ENCODE measurements at regions of chr10 and their contacts with region 1.

Region 1: DNA sequence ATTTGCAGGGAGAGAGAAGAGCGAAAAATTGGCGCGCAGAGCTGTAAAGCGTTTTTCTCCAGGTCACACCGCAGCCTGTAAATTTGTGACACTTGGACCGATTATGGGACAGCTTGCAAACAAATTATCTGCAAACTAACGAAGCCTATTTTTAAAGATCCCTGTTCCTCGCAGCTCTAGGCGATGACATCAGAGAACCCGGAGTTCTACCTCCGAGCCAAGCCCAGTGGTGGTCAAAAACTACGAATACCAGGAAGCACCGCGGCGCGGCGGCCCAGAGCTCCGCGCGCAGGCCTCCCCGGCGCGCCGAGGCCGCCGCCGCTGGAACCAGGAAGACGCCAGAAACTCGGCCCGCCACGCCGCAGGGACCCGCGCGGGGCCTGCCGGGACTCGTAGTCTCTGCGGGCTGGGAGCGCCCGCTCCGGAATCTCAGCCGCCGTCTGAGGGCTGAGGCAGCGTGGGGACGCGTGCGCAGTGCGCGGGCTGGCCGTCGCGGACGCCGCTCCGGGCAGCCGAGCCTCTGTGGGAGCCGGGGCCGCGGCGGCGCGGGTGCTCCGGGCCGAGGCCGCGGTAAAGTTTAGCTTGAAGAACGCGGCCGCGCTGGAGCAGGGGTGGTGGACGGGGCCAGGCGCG is at the start of gene PLEKHA1:
- DNase-seq: peak; percentile 96
- ATAC-seq: peak; percentile 93
- H3K4me3 Mint-ChIP-seq: peak within 1 kb of the TSS; percentile 87
- H3K27ac Mint-ChIP-seq: peak within 1 kb of the TSS; percentile 94
- H3K4me1 Mint-ChIP-seq: peaks cover 38% of the 10 kb centered on the region
- H3K27me3 Mint-ChIP-seq: peaks cover 2% of the 10 kb centered on the region
- total RNA-seq, gene PLEKHA1: 7.7 to 11.7 TPM

Region 2: DNA sequence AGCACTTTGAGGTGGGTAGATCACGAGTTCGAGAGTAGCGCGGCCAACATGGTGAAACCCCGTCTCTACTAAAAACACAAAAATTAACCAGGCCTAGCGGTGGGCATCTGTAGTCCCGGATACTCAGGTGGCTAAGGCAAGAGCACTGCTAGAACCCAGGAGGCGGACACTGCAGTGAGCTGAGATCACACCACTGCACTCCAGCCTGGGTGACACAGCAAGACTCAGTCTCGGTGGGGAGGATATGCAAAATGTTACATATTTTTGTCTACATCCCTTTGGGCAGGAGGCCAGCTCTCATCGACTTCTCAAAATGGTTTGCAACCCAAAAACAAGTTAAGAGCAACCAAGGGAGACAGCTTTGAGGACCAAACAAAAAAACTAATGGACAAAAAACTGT is 454.7 kb before region 1 on chr10:
- CTCF ChIA-PET with region 1: no interaction called
- POLR2A ChIA-PET with region 1: no interaction called
- intact Hi-C with region 1: no loop called
- DNase-seq: no peak
- ATAC-seq: no peak
- H3K4me3 Mint-ChIP-seq: no peak overlapping the region
- H3K27ac Mint-ChIP-seq: no peak overlapping the region
- H3K4me1 Mint-ChIP-seq: peaks cover 5% of the 10 kb centered on the region
- H3K27me3 Mint-ChIP-seq: no peaks in the 10 kb centered on the region

Region 3: GRCh38 chr10:121974535-121975294 is 399.6 kb before region 1 on chr10 and contains the start of gene NSMCE4A:
- CTCF ChIA-PET with region 1: no interaction called
- POLR2A ChIA-PET with region 1: no interaction called
- intact Hi-C with region 1: loop called in 1 of 2 experiments (anchors 10 kb)
- DNase-seq: peak; percentile 85
- ATAC-seq: peak; percentile 87
- H3K4me3 Mint-ChIP-seq: peak within 1 kb of the TSS; percentile 81
- H3K27ac Mint-ChIP-seq: peak within 1 kb of the TSS; percentile 42
- H3K4me1 Mint-ChIP-seq: peaks cover 19% of the 10 kb centered on the region
- H3K27me3 Mint-ChIP-seq: no peaks in the 10 kb centered on the region
- total RNA-seq, gene NSMCE4A: 56.3 to 56.4 TPM

Region 4: DNA sequence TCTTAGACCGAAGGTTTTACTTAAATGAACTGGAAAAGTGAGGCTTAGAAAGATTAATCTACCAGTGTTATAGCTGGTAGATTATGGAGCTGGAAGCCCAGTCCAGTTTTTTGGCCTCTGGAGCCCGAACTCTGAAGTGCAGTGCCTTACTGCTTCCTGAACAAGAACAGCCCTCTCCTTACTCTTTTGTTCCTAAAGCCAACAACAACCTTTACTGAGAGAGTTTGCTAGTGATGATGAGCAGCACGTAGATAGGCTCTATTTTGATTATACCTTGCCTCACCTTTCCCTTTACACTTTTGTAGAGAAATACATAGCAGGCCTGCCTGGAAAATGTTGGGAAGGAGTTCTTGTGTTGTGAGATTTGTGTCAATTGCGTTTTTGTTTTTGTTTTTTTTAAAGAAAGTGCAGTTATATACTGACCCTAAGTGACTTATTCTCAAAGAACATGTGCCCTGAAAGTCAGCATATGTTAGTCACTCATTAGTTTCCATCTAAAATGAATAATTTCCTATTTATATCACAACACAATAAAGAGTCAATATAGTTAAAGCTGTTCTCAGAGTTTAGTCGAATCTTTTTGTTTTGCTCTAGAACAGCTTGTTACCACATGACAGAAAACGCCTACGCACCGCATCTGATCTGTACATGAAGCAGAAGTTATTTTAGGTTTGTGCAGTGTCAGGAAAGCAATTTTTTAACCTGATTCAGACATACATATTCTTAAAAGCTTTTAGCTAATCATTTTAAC is 33.2 kb after region 1 on chr10:
- CTCF ChIA-PET with region 1: interaction called, 3 read pairs
- POLR2A ChIA-PET with region 1: interaction called, 3 read pairs
- intact Hi-C with region 1: loop called in 1 of 2 experiments (anchors 2 kb)
- DNase-seq: peak; percentile 80
- ATAC-seq: peak; percentile 77
- H3K4me3 Mint-ChIP-seq: no peak overlapping the region
- H3K27ac Mint-ChIP-seq: peak overlapping the region; percentile 71
- H3K4me1 Mint-ChIP-seq: peaks cover 34% of the 10 kb centered on the region
- H3K27me3 Mint-ChIP-seq: no peaks in the 10 kb centered on the region

Region 5: GRCh38 chr10:122435212-122435827 is 61.0 kb after region 1 on chr10:
- CTCF ChIA-PET with region 1: interaction called, 7 read pairs
- POLR2A ChIA-PET with region 1: no interaction called
- intact Hi-C with region 1: loop called in 1 of 2 experiments (anchors 1 kb)
- DNase-seq: no peak
- ATAC-seq: peak; percentile 39
- H3K4me3 Mint-ChIP-seq: no peak overlapping the region
- H3K27ac Mint-ChIP-seq: no peak overlapping the region
- H3K4me1 Mint-ChIP-seq: no peaks in the 10 kb centered on the region
- H3K27me3 Mint-ChIP-seq: no peaks in the 10 kb centered on the region

Region 6: DNA sequence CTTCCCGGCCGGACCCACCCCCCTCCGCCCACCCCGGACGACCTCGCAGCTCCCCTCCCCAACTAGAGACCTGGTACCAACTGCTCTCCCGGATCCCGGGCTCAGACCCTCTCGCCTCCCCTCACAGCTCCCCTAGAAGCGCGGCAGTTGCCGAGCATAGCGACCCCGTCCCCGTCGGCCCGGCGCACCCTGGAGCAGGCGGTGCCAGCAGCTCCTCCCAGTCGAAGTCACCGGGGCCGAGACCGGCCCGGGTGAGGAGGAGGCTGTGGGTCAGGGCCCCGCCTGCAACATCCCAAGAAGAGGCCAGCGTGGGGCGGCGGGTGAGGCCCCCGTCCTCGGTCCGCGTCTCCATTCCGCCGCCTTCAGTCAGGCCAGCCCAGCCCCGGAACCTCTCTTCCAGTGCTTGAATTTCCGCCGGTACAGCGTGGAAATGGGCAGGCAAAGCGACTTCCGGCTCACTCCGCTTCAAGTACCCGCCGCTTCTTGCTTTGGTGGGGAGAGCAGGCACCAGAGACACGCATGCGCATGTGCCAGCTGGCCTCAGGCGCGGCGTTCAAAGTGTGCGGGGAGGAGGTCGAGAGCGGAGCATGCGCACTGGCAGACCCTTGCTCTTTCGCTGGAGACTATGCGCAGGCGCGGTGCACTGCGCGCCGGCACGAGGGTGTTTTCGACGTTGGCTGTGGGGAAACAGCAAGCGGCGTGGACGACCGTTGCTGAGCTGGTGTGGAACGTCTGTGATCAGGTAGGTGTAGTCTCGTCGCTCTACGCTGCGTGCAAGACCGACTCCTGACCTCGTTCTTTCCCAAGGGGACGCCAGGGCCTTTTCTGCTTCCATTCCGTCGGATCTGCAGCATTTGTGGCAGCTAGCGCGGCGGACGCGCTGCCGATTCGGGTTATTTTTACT is 579.7 kb after region 1 on chr10 and contains the start of gene C10orf88:
- CTCF ChIA-PET with region 1: no interaction called
- POLR2A ChIA-PET with region 1: no interaction called
- intact Hi-C with region 1: loop called in 1 of 2 experiments (anchors 1 kb)
- DNase-seq: peak; percentile 98
- ATAC-seq: peak; percentile 98
- H3K4me3 Mint-ChIP-seq: peak within 1 kb of the TSS; percentile 77
- H3K27ac Mint-ChIP-seq: peak within 1 kb of the TSS; percentile 74
- H3K4me1 Mint-ChIP-seq: peaks cover 22% of the 10 kb centered on the region
- H3K27me3 Mint-ChIP-seq: no peaks in the 10 kb centered on the region
- total RNA-seq, gene C10orf88: 8.6 to 9.0 TPM

Region 7: DNA sequence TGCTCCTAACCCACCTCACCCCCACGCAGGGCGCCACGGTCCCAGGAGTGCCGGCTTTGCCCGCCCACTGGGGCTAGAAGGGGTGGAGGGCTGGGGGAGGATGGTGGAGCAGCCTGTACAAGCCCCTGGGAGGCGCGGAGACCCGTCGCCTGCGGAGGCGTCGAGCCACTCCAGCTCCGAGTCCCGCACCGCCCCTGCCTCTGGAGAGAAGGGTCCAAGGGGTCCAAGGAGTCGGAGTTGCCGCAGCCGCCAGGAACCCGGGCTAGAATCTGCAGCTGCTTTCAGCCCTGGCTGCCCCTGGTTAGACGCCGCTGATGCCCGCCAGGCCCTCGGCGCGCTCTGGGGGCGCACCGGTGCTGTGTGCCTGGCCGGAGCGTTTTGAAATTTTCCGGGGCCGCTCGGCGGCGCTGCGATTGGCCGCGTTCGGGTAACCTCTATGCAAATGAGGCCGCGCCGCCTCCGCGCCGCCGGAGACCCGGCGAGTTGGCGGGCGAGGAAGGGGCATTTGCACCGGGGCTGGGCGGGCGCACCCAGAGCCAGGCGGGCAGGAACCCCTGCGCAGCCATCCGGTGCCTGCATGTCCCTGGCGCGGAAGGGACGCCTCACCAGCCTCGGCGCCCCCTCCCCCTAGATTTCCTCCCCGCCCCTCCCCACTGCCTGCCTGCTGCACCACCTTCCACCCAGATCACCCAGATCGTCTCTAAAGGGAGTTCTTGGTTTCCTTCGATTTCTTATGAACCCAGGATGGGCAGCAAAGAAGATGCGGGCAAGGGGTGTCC is 773.5 kb after region 1 on chr10 and contains the start of gene HMX2:
- CTCF ChIA-PET with region 1: no interaction called
- POLR2A ChIA-PET with region 1: no interaction called
- intact Hi-C with region 1: no loop called
- DNase-seq: peak; percentile 73
- ATAC-seq: peak; percentile 16
- H3K4me3 Mint-ChIP-seq: peak within 1 kb of the TSS; percentile 60
- H3K27ac Mint-ChIP-seq: no peak within 1 kb of the TSS
- H3K4me1 Mint-ChIP-seq: peaks cover 69% of the 10 kb centered on the region
- H3K27me3 Mint-ChIP-seq: peaks cover 54% of the 10 kb centered on the region
- total RNA-seq, gene HMX2: 0.18 to 0.28 TPM

Region 8: GRCh38 chr10:123287594-123288247 is 913.4 kb after region 1 on chr10:
- CTCF ChIA-PET with region 1: no interaction called
- POLR2A ChIA-PET with region 1: no interaction called
- intact Hi-C with region 1: loop called in 1 of 2 experiments (anchors 10 kb)
- DNase-seq: peak; percentile 75
- ATAC-seq: peak; percentile 99
- H3K4me3 Mint-ChIP-seq: no peak overlapping the region
- H3K27ac Mint-ChIP-seq: peak overlapping the region; percentile 70
- H3K4me1 Mint-ChIP-seq: peaks cover 22% of the 10 kb centered on the region
- H3K27me3 Mint-ChIP-seq: peaks cover 3% of the 10 kb centered on the region

Measured in activated CD4-positive, alpha-beta T cell treated with anti-CD3 and anti-CD28 coated beads for 36 hours (primary cell).